ENCODE measurements at regions of chr17 and their contacts with region 1.

Region 1: DNA sequence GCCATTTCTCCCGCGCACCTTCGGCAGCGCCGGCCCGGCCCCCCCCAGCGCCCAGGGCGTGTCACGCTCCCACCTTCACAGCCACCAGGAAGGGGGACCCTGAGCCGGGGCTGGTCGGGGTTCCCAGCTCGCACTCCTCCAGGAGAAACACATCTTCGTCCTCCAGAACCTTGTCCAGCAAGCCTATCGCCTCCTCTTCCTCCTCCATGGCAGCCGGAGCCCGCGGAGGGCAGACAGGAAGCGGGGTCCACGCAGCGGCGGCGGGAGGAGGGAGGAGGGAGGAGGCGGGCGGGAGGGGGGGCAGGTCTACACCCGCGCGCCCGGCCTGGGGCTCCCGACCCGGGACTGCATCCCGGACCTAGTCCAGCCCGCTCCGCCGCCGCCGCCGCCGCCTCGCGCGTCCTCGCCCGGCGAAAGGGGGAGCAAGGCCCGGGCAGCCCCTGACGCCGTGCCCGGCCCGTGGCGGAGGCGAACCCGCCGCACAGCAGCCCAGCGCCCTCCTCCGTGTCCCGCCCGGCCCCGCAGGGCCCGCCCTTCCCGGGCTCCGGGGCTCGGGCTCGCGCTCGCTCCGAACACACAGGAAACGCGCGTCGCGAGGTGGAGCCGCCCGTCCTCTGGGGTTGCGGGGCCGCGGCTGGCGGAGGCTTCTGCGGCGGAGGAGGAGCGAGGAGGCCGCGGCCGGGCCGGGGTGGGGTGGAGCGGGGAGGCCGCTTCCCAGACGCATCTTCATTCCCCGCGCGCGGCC is 70.7 kb downstream of the ABR start:
- DNase-seq: peak; percentile 71 to 80 (median 79)
- H3K4me3 ChIP-seq: peak overlapping the region in 1 of 2 donors; percentile 67
- H3K4me3 Mint-ChIP-seq: peak overlapping the region; percentile 86 to 90 (median 88)
- H3K27ac ChIP-seq: peak overlapping the region; percentile 74
- H3K27ac Mint-ChIP-seq: peak overlapping the region; percentile 79 to 92 (median 90)
- H3K4me1 ChIP-seq: peaks cover 25% of the 10 kb centered on the region
- H3K4me1 Mint-ChIP-seq: peaks cover 19 to 53% (median 39%) of the 10 kb centered on the region in 4 donors
- H3K27me3 ChIP-seq: no peaks in the 10 kb centered on the region
- H3K27me3 Mint-ChIP-seq: no peaks in the 10 kb centered on the region

Region 2: GRCh38 chr17:1055751-1056645 is 53.0 kb before region 1 on chr17:
- CTCF ChIA-PET with region 1: interaction called, 3 read pairs
- POLR2A ChIA-PET with region 1: no interaction called
- intact Hi-C with region 1: loop called (anchors 5 kb)
- DNase-seq: peak in 3 of 5 donors; percentile 10 to 29 (median 16)
- H3K4me3 ChIP-seq: no peak overlapping the region
- H3K4me3 Mint-ChIP-seq: no peak overlapping the region
- H3K27ac ChIP-seq: no peak overlapping the region
- H3K27ac Mint-ChIP-seq: peak overlapping the region in 1 of 7 donors; percentile 36
- H3K4me1 ChIP-seq: no peaks in the 10 kb centered on the region
- H3K4me1 Mint-ChIP-seq: peaks cover 0 to 6% (median 0%) of the 10 kb centered on the region in 4 donors
- H3K27me3 ChIP-seq: no peaks in the 10 kb centered on the region
- H3K27me3 Mint-ChIP-seq: no peaks in the 10 kb centered on the region

Region 3: DNA sequence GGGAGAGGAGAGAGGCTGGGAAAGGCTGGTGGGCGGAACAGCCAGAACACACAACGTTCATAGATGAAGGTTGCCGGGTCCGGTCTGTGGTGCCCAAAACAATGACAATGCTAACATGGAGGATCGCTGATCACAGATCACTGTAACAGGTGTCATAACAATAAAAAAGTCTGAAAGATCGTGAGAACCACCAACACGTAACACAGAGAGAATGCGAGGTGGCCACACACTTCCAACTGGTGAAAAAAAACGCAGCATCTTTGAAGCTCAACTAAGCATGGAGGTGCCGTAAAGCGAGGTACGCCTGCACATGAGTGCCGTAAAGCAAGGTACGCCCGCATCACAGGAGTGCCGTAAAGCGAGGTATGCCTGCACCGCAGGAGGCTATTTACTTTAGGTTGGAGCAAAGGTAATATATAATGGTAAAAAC is 28.4 kb after region 1 on chr17:
- CTCF ChIA-PET with region 1: no interaction called
- POLR2A ChIA-PET with region 1: no interaction called
- intact Hi-C with region 1: no loop called
- DNase-seq: peak in 4 of 5 donors; percentile 14 to 44 (median 17)
- H3K4me3 ChIP-seq: no peak overlapping the region
- H3K4me3 Mint-ChIP-seq: peak overlapping the region in 2 of 8 donors; percentile 2 to 47
- H3K27ac ChIP-seq: no peak overlapping the region
- H3K27ac Mint-ChIP-seq: no peak overlapping the region
- H3K4me1 ChIP-seq: no peaks in the 10 kb centered on the region
- H3K4me1 Mint-ChIP-seq: peaks cover 0 to 2% (median 0%) of the 10 kb centered on the region in 4 donors
- H3K27me3 ChIP-seq: no peaks in the 10 kb centered on the region
- H3K27me3 Mint-ChIP-seq: no peaks in the 10 kb centered on the region

Region 4: DNA sequence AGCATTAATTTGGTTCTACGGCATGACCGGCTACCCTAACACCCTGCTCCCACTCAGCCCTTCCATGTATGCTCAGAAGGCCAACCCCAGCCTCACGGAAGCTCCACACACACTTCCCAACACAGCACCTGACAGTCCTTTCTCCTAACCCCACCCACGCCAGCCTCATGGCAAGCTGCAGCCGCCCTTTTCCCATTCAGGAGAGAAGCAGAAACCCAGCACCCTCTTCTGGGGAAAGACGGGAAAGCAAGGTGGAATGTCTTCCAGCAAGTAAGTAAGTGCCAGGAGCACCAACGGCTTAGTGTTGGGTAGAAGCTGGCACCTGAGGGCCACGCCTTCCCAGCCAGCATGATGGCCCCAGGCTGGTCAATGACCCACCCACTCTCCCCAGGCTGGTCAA is 38.6 kb after region 1 on chr17:
- CTCF ChIA-PET with region 1: no interaction called
- POLR2A ChIA-PET with region 1: no interaction called
- intact Hi-C with region 1: no loop called
- DNase-seq: no peak
- H3K4me3 ChIP-seq: no peak overlapping the region
- H3K4me3 Mint-ChIP-seq: no peak overlapping the region
- H3K27ac ChIP-seq: no peak overlapping the region
- H3K27ac Mint-ChIP-seq: peak overlapping the region in 1 of 7 donors; percentile 12
- H3K4me1 ChIP-seq: no peaks in the 10 kb centered on the region
- H3K4me1 Mint-ChIP-seq: no peaks in the 10 kb centered on the region
- H3K27me3 ChIP-seq: no peaks in the 10 kb centered on the region
- H3K27me3 Mint-ChIP-seq: no peaks in the 10 kb centered on the region

Region 5: GRCh38 chr17:1399679-1400512 is 290.9 kb after region 1 on chr17 and contains the start of gene YWHAE:
- CTCF ChIA-PET with region 1: no interaction called
- POLR2A ChIA-PET with region 1: no interaction called
- intact Hi-C with region 1: loop called (anchors 5 kb)
- DNase-seq: peak; percentile 93 to 96 (median 94)
- H3K4me3 ChIP-seq: peak within 1 kb of the TSS; percentile 76 to 100
- H3K4me3 Mint-ChIP-seq: peak within 1 kb of the TSS; percentile 96 to 99 (median 98)
- H3K27ac ChIP-seq: peak within 1 kb of the TSS; percentile 95
- H3K27ac Mint-ChIP-seq: peak within 1 kb of the TSS; percentile 97 to 100 (median 98)
- H3K4me1 ChIP-seq: peaks cover 41% of the 10 kb centered on the region
- H3K4me1 Mint-ChIP-seq: peaks cover 23 to 42% (median 33%) of the 10 kb centered on the region in 4 donors
- H3K27me3 ChIP-seq: no peaks in the 10 kb centered on the region
- H3K27me3 Mint-ChIP-seq: peaks cover 0 to 3% of the 10 kb centered on the region in 2 donors
- total RNA-seq, gene YWHAE: 142 to 143 TPM